PC-9 (cell line): ENCODE measurements at regions of chr7 and their contacts with region 1.

Region 1: GRCh38 chr7:16078076-16078952 is 343.0 kb downstream of the CRPPA start:
- DNase-seq: peak; percentile 55 to 69
- H3K4me3 ChIP-seq: no peak overlapping the region
- H3K27ac ChIP-seq: no peak overlapping the region
- H3K4me1 ChIP-seq: no peaks in the 10 kb centered on the region
- H3K27me3 ChIP-seq: no peaks in the 10 kb centered on the region
- CTCF ChIP-seq: peak; percentile 93

Region 2: GRCh38 chr7:16007911-16008310 is 70.4 kb before region 1 on chr7:
- CTCF ChIA-PET with region 1: no interaction called
- POLR2A ChIA-PET with region 1: no interaction called
- intact Hi-C with region 1: no loop called
- DNase-seq: no peak
- H3K4me3 ChIP-seq: no peak overlapping the region
- H3K27ac ChIP-seq: no peak overlapping the region
- H3K4me1 ChIP-seq: no peaks in the 10 kb centered on the region
- H3K27me3 ChIP-seq: no peaks in the 10 kb centered on the region
- CTCF ChIP-seq: no peak

Region 3: GRCh38 chr7:16098585-16099179 is 20.4 kb after region 1 on chr7:
- CTCF ChIA-PET with region 1: interaction called, 5 read pairs
- POLR2A ChIA-PET with region 1: no interaction called
- intact Hi-C with region 1: loop called (anchors 1 kb)
- DNase-seq: peak in 1 of 2 experiments; percentile 20
- H3K4me3 ChIP-seq: no peak overlapping the region
- H3K27ac ChIP-seq: no peak overlapping the region
- H3K4me1 ChIP-seq: peaks cover 7% of the 10 kb centered on the region
- H3K27me3 ChIP-seq: no peaks in the 10 kb centered on the region
- CTCF ChIP-seq: peak; percentile 89

Region 4: GRCh38 chr7:16268821-16269768 is 190.8 kb after region 1 on chr7:
- CTCF ChIA-PET with region 1: no interaction called
- POLR2A ChIA-PET with region 1: interaction called, 12 read pairs
- intact Hi-C with region 1: no loop called
- DNase-seq: peak; percentile 76 to 91
- H3K4me3 ChIP-seq: 0 out of 2 replicates have a peak overlapping the region, but pooled peaks have one; percentile 12
- H3K27ac ChIP-seq: 0 out of 2 replicates have a peak overlapping the region, but pooled peaks have one; percentile 10
- H3K4me1 ChIP-seq: peaks cover 35% of the 10 kb centered on the region
- H3K27me3 ChIP-seq: no peaks in the 10 kb centered on the region
- CTCF ChIP-seq: no peak

Region 5: DNA sequence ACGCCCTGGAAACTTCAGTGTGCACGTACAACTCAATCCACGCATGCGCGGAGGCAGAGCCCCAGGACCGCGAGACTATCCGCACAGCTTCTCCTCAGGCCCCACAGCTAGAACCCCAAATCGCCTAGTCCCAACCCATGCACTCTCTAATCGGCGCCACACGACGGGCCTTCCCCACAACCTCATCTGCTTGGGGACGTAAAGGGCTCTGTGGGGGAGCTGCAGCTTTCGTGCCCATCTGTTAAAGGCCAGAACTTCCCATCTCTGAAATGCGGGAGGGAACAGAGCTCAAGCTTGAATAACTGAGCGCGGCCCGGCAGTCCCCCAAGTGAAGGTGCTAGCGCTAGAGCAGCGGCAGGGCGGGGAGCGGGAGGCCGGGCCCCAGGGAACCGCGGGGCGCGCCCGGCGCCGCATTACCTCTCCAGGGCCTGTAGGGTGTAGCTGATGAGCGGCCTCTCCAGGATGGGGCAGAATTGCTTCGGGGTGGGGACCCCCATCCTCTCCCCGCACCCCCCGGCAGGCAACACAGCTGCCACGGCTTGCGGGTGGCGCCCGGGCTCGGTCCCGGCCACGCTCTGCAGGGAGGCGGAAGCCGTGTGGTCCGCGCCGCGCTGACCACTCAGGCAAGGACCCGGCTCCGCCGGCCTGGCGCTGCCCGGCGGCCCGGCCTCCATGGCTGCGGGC is 342.5 kb after region 1 on chr7:
- CTCF ChIA-PET with region 1: no interaction called
- POLR2A ChIA-PET with region 1: no interaction called
- intact Hi-C with region 1: loop called (anchors 1 kb)
- DNase-seq: peak; percentile 90 to 92
- H3K4me3 ChIP-seq: peak overlapping the region; percentile 68
- H3K27ac ChIP-seq: peak overlapping the region; percentile 89
- H3K4me1 ChIP-seq: peaks cover 56% of the 10 kb centered on the region
- H3K27me3 ChIP-seq: no peaks in the 10 kb centered on the region
- CTCF ChIP-seq: peak; percentile 53; the same call in 1 of the 2 replicates

Region 6: GRCh38 chr7:16801111-16801542 is 722.8 kb after region 1 on chr7:
- CTCF ChIA-PET with region 1: no interaction called
- POLR2A ChIA-PET with region 1: no interaction called
- intact Hi-C with region 1: loop called (anchors 2 kb)
- DNase-seq: peak; percentile 15 to 79
- H3K4me3 ChIP-seq: no peak overlapping the region
- H3K27ac ChIP-seq: no peak overlapping the region
- H3K4me1 ChIP-seq: peaks cover 50% of the 10 kb centered on the region
- H3K27me3 ChIP-seq: no peaks in the 10 kb centered on the region
- CTCF ChIP-seq: peak; percentile 85